Natural killer cell (primary cell): ENCODE measurements at regions of chr12 and their contacts with region 1.

Region 1: DNA sequence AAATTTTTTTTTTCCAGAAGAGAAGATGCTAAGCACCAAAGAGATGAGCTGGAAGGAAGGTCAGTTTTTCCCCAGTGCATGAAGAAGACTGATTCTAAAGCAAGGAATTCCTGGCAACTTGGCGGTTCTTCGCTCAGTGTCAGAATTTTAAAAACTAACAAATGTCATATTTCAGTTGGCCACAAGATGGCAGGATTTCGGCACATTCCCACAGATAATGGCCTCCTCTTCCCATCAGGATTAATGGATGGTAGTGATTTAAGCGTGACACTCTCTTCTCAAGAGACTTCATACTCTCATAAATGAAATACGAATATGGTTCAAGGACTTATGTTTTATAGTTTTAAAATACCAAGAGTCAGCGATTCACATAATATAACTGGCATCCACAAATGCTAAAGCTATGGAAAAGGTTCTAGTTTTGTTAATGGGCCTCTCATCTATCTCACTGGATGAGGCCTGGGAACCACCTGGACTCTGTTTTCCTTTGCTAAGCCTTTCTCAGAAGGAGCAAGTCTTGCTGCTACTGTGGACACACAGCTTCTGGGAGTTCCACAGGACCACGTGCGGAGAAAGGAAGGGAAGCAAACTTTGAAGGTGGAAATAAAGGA is 46.1 kb upstream of the PTPRO start:
- DNase-seq: peak in 1 of 2 donors; percentile 40
- ATAC-seq: no peak
- H3K4me3 ChIP-seq: no peak overlapping the region
- H3K4me3 Mint-ChIP-seq: no peak overlapping the region
- H3K27ac ChIP-seq: no peak overlapping the region
- H3K27ac Mint-ChIP-seq: no peak overlapping the region
- H3K4me1 ChIP-seq: peaks cover 12% of the 10 kb centered on the region
- H3K4me1 Mint-ChIP-seq: peaks cover 18 to 20% of the 10 kb centered on the region in 2 donors
- H3K27me3 ChIP-seq: peaks cover under 1% of the 10 kb centered on the region
- H3K27me3 Mint-ChIP-seq: peaks cover 3 to 7% of the 10 kb centered on the region in 2 donors
- CTCF ChIP-seq: peak; percentile 66

Region 2: GRCh38 chr12:15244341-15244740 is 31.9 kb before region 1 on chr12:
- intact Hi-C with region 1: no loop called
- DNase-seq: no peak
- ATAC-seq: no peak
- H3K4me3 ChIP-seq: no peak overlapping the region
- H3K4me3 Mint-ChIP-seq: no peak overlapping the region
- H3K27ac ChIP-seq: no peak overlapping the region
- H3K27ac Mint-ChIP-seq: no peak overlapping the region
- H3K4me1 ChIP-seq: no peaks in the 10 kb centered on the region
- H3K4me1 Mint-ChIP-seq: no peaks in the 10 kb centered on the region
- H3K27me3 ChIP-seq: peaks cover 2% of the 10 kb centered on the region
- H3K27me3 Mint-ChIP-seq: peaks cover 27 to 54% of the 10 kb centered on the region in 2 donors
- CTCF ChIP-seq: no peak

Region 3: GRCh38 chr12:15522565-15523187 is 246.5 kb after region 1 on chr12:
- intact Hi-C with region 1: loop called (anchors 5 kb)
- DNase-seq: peak in 1 of 2 donors; percentile 32
- ATAC-seq: no peak
- H3K4me3 ChIP-seq: no peak overlapping the region
- H3K4me3 Mint-ChIP-seq: no peak overlapping the region
- H3K27ac ChIP-seq: no peak overlapping the region
- H3K27ac Mint-ChIP-seq: no peak overlapping the region
- H3K4me1 ChIP-seq: no peaks in the 10 kb centered on the region
- H3K4me1 Mint-ChIP-seq: no peaks in the 10 kb centered on the region
- H3K27me3 ChIP-seq: peaks cover 3% of the 10 kb centered on the region
- H3K27me3 Mint-ChIP-seq: peaks cover 17 to 38% of the 10 kb centered on the region in 2 donors
- CTCF ChIP-seq: peak; percentile 5

Region 4: GRCh38 chr12:15584366-15585041 is 308.3 kb after region 1 on chr12:
- intact Hi-C with region 1: loop called (anchors 10 kb)
- DNase-seq: peak in 1 of 2 donors; percentile 84
- ATAC-seq: no peak
- H3K4me3 ChIP-seq: no peak overlapping the region
- H3K4me3 Mint-ChIP-seq: no peak overlapping the region
- H3K27ac ChIP-seq: no peak overlapping the region
- H3K27ac Mint-ChIP-seq: no peak overlapping the region
- H3K4me1 ChIP-seq: no peaks in the 10 kb centered on the region
- H3K4me1 Mint-ChIP-seq: no peaks in the 10 kb centered on the region
- H3K27me3 ChIP-seq: peaks cover under 1% of the 10 kb centered on the region
- H3K27me3 Mint-ChIP-seq: peaks cover 0 to 2% of the 10 kb centered on the region in 2 donors
- CTCF ChIP-seq: peak; percentile 42

Region 5: DNA sequence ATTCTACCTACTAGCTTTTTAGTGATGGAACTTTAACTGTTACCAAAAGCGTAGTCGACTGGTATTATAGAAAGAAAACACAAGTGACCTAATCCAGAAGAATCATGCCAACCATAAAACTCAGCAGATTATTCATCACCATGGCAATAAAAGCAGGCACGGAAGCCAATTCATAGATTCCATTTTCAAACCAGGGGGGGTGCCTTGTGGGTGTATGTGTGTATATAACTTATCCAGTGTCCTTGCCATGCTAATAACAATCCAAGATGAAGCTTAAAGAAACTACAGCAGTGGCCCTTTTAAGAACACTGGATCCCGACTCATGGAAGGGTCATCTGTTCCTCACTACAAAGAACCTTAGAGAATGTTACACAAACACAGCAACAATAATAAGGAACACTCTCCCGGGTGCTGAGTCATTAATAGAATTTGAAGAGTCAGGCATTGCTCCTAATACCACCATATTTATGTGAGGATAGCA is 452.0 kb after region 1 on chr12:
- intact Hi-C with region 1: no loop called
- DNase-seq: no peak
- ATAC-seq: no peak
- H3K4me3 ChIP-seq: no peak overlapping the region
- H3K4me3 Mint-ChIP-seq: no peak overlapping the region
- H3K27ac ChIP-seq: no peak overlapping the region
- H3K27ac Mint-ChIP-seq: no peak overlapping the region
- H3K4me1 ChIP-seq: no peaks in the 10 kb centered on the region
- H3K4me1 Mint-ChIP-seq: no peaks in the 10 kb centered on the region
- H3K27me3 ChIP-seq: no peaks in the 10 kb centered on the region
- H3K27me3 Mint-ChIP-seq: peaks cover 7 to 11% of the 10 kb centered on the region in 2 donors
- CTCF ChIP-seq: no peak